K562 (cell line): ENCODE measurements at regions of chr11 and their contacts with region 1.

Region 1: DNA sequence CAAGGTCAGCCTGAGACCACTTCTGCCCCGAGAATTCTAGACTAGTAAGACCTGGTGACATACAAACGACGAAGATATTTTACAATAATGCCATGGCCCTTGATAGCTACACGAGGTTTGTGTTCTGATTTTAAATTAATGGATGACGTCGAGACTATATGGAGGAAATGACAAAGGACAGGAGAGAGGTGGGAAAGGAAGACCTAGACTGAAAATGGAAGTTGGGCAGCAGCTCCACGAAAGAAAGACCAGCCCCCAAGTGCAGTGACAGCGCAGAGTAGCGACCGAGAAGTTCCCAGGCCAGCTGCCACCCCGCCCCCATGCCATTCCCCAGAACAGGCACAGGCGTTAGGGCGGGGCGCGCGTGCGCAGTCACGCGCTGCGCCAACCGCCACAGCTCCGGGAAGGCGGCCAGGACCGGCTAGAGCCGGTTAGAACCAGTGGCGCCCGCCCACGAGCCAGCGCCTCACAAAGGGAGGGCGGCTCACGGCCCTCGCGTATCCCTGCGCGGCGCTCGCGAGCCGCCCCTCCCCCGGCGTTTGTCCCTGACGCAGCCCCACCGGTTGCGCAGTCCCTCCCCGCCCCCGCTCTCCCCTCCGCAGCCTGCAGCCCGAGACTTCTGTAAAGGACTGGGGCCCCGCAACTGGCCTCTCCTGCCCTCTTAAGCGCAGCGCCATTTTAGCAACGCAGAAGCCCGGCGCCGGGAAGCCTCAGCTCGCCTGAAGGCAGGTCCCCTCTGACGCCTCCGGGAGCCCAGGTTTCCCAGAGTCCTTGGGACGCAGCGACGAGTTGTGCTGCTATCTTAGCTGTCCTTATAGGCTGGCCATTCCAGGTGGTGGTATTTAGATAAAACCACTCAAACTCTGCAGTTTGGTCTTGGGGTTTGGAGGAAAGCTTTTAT is 1.5 kb upstream of the MALAT1 start:
- DNase-seq: peak; percentile 86 to 100 (median 90)
- ATAC-seq: peak; percentile 76
- H3K4me3 ChIP-seq: peak overlapping the region; percentile 84
- H3K27ac ChIP-seq: peak overlapping the region; percentile 99
- H3K4me1 ChIP-seq: peaks cover 36 to 38% of the 10 kb centered on the region in 2 experiments
- H3K27me3 ChIP-seq: no peaks in the 10 kb centered on the region
- CTCF ChIP-seq: peak in 1 of 3 experiments; percentile 5; a peak in 1 of 6 replicates
- EP300 ChIP-seq: peak; percentile 99
- POLR2A ChIP-seq: peak; percentile 82
- RAD21 ChIP-seq: peak in 1 of 2 experiments; percentile 47

Region 2: GRCh38 chr11:65274735-65275682 is 222.4 kb before region 1 on chr11:
- CTCF ChIA-PET with region 1: no interaction called
- POLR2A ChIA-PET with region 1: interaction called, 23 read pairs
- in situ Hi-C with region 1: no loop called
- intact Hi-C with region 1: no loop called
- DNase-seq: peak; percentile 72 to 92 (median 77)
- ATAC-seq: peak; percentile 97
- H3K4me3 ChIP-seq: no peak overlapping the region
- H3K27ac ChIP-seq: peak overlapping the region; percentile 71
- H3K4me1 ChIP-seq: peaks cover 0 to 9% of the 10 kb centered on the region in 2 experiments; a peak in 3 of 5 replicates
- H3K27me3 ChIP-seq: no peaks in the 10 kb centered on the region
- CTCF ChIP-seq: peak; percentile 86 to 97 (median 88)
- EP300 ChIP-seq: peak; percentile 73
- POLR2A ChIP-seq: no peak
- RAD21 ChIP-seq: peak; percentile 94 to 95

Region 3: GRCh38 chr11:65366340-65366773 is 131.0 kb before region 1 on chr11:
- CTCF ChIA-PET with region 1: no interaction called
- POLR2A ChIA-PET with region 1: interaction called, 53 read pairs
- in situ Hi-C with region 1: no loop called
- intact Hi-C with region 1: no loop called
- DNase-seq: peak; percentile 70 to 83 (median 76)
- ATAC-seq: peak; percentile 82
- H3K4me3 ChIP-seq: no peak overlapping the region
- H3K27ac ChIP-seq: peak overlapping the region; percentile 12; the same call in 2 of the 3 replicates
- H3K4me1 ChIP-seq: peaks cover 34 to 40% of the 10 kb centered on the region in 2 experiments; a peak in 4 of 5 replicates
- H3K27me3 ChIP-seq: no peaks in the 10 kb centered on the region
- CTCF ChIP-seq: peak; percentile 74 to 93 (median 78)
- EP300 ChIP-seq: no peak
- POLR2A ChIP-seq: no peak
- RAD21 ChIP-seq: peak; percentile 90 to 93

Region 4: GRCh38 chr11:65403607-65404121 is 93.7 kb before region 1 on chr11:
- CTCF ChIA-PET with region 1: no interaction called
- POLR2A ChIA-PET with region 1: interaction called, 25 read pairs
- in situ Hi-C with region 1: no loop called
- intact Hi-C with region 1: no loop called
- DNase-seq: peak in 1 of 4 experiments; percentile 57
- ATAC-seq: peak; percentile 76
- H3K4me3 ChIP-seq: no peak overlapping the region
- H3K27ac ChIP-seq: peak overlapping the region; percentile 33; the same call in 2 of the 3 replicates
- H3K4me1 ChIP-seq: peaks cover 9 to 49% of the 10 kb centered on the region in 2 experiments
- H3K27me3 ChIP-seq: no peaks in the 10 kb centered on the region
- CTCF ChIP-seq: no peak
- EP300 ChIP-seq: no peak
- POLR2A ChIP-seq: no peak
- RAD21 ChIP-seq: no peak

Region 5: GRCh38 chr11:65448418-65449105 is 48.8 kb before region 1 on chr11:
- CTCF ChIA-PET with region 1: no interaction called
- POLR2A ChIA-PET with region 1: interaction called, 309 read pairs
- in situ Hi-C with region 1: no loop called
- intact Hi-C with region 1: no loop called
- DNase-seq: peak; percentile 73 to 90 (median 78)
- ATAC-seq: peak; percentile 82
- H3K4me3 ChIP-seq: no peak overlapping the region
- H3K27ac ChIP-seq: peak overlapping the region; percentile 64
- H3K4me1 ChIP-seq: peaks cover 17 to 46% of the 10 kb centered on the region in 2 experiments; a peak in 4 of 5 replicates
- H3K27me3 ChIP-seq: no peaks in the 10 kb centered on the region
- CTCF ChIP-seq: no peak
- EP300 ChIP-seq: no peak
- POLR2A ChIP-seq: 0 out of 2 replicates have a peak, but pooled peaks have one; percentile 25
- RAD21 ChIP-seq: no peak

Region 6: DNA sequence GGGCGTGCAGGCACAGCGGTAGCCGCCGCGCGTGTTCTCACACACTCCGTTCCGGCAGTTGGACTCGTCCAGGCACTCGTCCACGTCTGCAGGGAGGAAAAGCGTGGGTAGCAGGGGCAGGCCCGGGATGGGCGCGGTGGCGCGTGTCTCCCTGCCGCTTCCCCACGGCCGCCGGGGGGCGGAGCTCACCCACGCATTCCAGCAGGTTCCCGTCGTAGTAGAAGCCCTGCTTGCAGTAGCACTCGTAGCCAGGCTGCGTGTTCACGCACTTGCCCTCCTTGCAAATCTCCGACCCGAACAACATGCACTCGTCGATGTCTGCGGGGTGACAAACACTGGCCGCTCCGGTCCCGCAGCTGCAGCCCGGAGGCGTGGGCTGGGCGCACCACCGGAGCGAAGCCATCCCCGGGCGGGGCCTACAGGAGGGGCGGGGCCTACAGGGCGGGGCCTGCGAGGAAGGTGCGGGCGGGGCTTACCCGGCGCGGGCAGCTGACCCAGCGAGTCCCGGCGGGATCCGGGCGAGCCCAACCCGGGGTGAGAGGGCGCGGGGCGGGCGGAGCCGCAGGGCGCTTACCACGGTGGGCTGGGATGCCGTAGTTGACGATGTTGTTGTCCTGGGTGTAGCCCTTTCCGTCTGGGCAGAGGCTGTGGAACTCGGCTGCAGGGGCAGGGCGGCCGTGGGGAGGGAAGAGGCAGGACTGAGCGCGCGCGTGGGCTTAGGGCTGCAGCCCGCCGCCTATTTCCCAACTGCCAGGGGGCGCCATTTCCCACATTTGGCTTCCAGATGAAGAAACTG is 43.1 kb after region 1 on chr11:
- CTCF ChIA-PET with region 1: no interaction called
- POLR2A ChIA-PET with region 1: interaction called, 16 read pairs
- in situ Hi-C with region 1: no loop called
- intact Hi-C with region 1: no loop called
- DNase-seq: peak; percentile 92 to 97 (median 94)
- ATAC-seq: peak; percentile 97
- H3K4me3 ChIP-seq: peak overlapping the region; percentile 76
- H3K27ac ChIP-seq: peak overlapping the region; percentile 78
- H3K4me1 ChIP-seq: peaks cover 9 to 48% of the 10 kb centered on the region in 2 experiments
- H3K27me3 ChIP-seq: no peaks in the 10 kb centered on the region
- CTCF ChIP-seq: peak; percentile 88 to 94 (median 92)
- EP300 ChIP-seq: no peak
- POLR2A ChIP-seq: peak; percentile 69
- RAD21 ChIP-seq: peak; percentile 92 to 96

Region 7: DNA sequence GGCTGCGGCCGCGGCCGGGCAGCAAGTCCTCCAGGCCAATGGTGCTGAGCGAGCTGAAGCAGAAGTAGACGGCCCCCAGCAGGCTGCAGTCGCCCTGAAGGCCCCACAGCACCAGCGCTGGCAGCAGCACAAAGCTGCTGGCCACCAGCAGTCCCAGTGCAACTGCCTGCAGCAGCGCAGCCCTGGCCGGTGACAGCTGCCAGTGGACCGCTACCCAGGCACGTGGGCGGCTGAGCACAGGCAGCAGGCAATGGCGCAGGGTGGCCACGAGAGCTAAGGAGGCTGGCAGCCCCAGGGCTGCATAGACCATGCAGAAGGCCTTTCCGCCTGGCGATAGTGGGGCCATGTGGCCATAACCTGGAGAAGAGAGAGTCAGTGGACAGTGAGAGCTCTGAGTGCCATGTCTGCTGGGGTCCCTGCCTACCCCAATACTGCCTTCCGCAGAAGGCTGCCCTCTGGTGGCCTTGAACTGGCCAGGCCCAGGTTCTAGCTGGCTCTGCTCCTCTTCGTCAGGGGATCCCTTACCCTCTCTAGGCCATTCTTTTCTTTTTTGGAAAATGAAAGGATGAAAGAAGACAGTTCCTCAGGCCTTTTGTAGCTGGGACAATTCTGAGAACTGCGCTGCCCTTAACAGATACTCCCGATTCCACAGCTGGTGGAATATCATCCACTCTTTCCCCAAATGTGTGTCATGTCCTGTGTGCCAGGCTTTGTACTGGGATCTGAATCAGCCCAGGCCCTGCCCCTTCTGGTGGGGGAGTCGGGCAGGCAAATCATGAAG is 96.3 kb after region 1 on chr11:
- CTCF ChIA-PET with region 1: no interaction called
- POLR2A ChIA-PET with region 1: interaction called, 10 read pairs
- in situ Hi-C with region 1: no loop called
- intact Hi-C with region 1: no loop called
- DNase-seq: peak; percentile 46 to 67 (median 56)
- ATAC-seq: peak; percentile 80
- H3K4me3 ChIP-seq: no peak overlapping the region
- H3K27ac ChIP-seq: no peak overlapping the region
- H3K4me1 ChIP-seq: peaks cover 8 to 59% of the 10 kb centered on the region in 2 experiments; a peak in 4 of 5 replicates
- H3K27me3 ChIP-seq: no peaks in the 10 kb centered on the region
- CTCF ChIP-seq: peak; percentile 67 to 83 (median 71)
- EP300 ChIP-seq: no peak
- POLR2A ChIP-seq: 0 out of 2 replicates have a peak, but pooled peaks have one; percentile 32
- RAD21 ChIP-seq: peak; percentile 29 to 54; a peak in 3 of 4 replicates

Region 8: DNA sequence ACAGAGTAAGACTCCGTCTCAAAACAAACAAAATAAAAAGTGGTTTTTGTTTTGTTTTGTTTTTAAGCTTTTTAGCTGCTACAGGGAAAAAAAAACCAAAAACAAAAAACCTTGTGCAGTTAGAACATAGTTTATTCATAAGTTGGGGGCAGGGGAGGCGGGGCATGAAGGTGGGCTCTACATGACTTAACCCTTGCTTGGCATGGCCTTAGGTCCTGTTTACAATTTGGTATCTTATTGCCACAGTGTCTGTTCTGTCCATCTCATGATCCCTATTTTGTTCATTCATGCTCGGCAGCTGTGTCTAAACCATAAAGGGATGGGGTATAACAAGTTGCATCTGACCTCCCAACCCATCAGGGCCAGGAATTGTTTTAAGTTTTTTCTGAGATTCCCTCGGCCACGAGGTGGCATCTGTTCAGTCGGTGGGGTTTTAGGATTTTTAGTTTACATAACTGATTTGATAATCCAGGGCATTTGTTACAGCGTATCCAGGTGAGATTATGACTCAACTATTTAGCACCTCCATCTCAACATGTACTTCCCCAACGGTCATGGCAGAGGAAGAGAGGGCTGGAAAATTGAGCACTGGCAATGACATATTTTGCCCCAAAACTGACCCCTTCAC is 276.5 kb after region 1 on chr11:
- CTCF ChIA-PET with region 1: no interaction called
- POLR2A ChIA-PET with region 1: no interaction called
- in situ Hi-C with region 1: no loop called
- intact Hi-C with region 1: no loop called
- DNase-seq: no peak
- ATAC-seq: no peak
- H3K4me3 ChIP-seq: no peak overlapping the region
- H3K27ac ChIP-seq: no peak overlapping the region
- H3K4me1 ChIP-seq: peaks cover 0 to 14% of the 10 kb centered on the region in 2 experiments; a peak in 2 of 5 replicates
- H3K27me3 ChIP-seq: no peaks in the 10 kb centered on the region
- CTCF ChIP-seq: peak in 2 of 3 experiments; percentile 2 to 14; a peak in 1 of 6 replicates
- EP300 ChIP-seq: no peak
- POLR2A ChIP-seq: no peak
- RAD21 ChIP-seq: no peak